Dendritic cell treated with granulocyte-macrophage colony-stimulating factor and Interleukin-4, amounts not matched to agents 40 ng/mL and 50 ng/mL, for 4 days (primary cell): ENCODE measurements at regions of chr6 and their contacts with region 1.

Region 1: DNA sequence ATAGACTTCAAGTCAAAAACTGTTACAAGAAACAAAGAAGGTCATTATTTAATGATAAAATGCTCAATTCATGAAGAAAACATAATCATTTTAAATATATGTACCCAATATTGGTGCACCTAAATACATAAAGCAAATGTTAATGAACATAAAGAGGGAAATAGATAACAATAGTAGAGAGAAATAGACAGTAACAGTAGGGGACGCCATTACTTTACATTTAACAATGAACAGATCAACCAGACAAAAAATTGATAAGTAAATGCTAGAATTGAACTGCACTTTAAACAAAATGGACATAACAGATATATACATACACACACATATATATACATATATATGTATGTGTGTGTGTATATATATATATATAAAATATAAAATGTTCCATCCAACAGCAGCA is 37.4 kb downstream of the IL22RA2 start:
- H3K4me3 Mint-ChIP-seq: no peak overlapping the region
- H3K27ac Mint-ChIP-seq: no peak overlapping the region
- H3K4me1 Mint-ChIP-seq: peaks cover 16% of the 10 kb centered on the region
- H3K27me3 Mint-ChIP-seq: peaks cover 7% of the 10 kb centered on the region

Region 2: GRCh38 chr6:137171824-137172705 is 36.0 kb after region 1 on chr6:
- intact Hi-C with region 1: no loop called
- H3K4me3 Mint-ChIP-seq: no peak overlapping the region
- H3K27ac Mint-ChIP-seq: peak overlapping the region; percentile 48
- H3K4me1 Mint-ChIP-seq: peaks cover 43% of the 10 kb centered on the region
- H3K27me3 Mint-ChIP-seq: no peaks in the 10 kb centered on the region

Region 3: DNA sequence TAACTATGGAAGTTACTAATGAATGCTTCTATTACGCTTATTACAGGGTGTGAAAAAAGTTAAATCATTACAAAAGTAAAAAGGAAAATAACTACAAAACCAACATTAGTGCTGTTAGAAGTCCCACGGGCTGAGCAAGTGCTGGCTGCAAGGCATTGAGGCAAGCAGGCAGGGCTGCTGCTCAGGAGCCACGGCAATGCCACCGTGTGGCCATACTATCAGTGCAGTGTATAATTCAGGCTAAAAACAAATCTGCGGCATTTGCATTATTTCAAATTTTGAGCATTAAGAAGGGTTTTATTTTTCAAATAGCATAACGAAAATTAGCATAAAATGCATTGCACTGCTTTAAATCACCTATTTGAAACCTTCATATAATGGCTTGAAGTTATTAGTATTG is 66.0 kb after region 1 on chr6:
- intact Hi-C with region 1: loop called (anchors 5 kb)
- H3K4me3 Mint-ChIP-seq: no peak overlapping the region
- H3K27ac Mint-ChIP-seq: no peak overlapping the region
- H3K4me1 Mint-ChIP-seq: peaks cover 16% of the 10 kb centered on the region
- H3K27me3 Mint-ChIP-seq: no peaks in the 10 kb centered on the region

Region 4: GRCh38 chr6:137218917-137219663 is 83.0 kb after region 1 on chr6 and contains the start of gene IFNGR1:
- intact Hi-C with region 1: loop called (anchors 5 kb)
- H3K4me3 Mint-ChIP-seq: peak within 1 kb of the TSS; percentile 93
- H3K27ac Mint-ChIP-seq: peak within 1 kb of the TSS; percentile 100
- H3K4me1 Mint-ChIP-seq: peaks cover 66% of the 10 kb centered on the region
- H3K27me3 Mint-ChIP-seq: no peaks in the 10 kb centered on the region

Region 5: GRCh38 chr6:137271245-137272183 is 135.4 kb after region 1 on chr6:
- intact Hi-C with region 1: loop called (anchors 5 kb)
- H3K4me3 Mint-ChIP-seq: no peak overlapping the region
- H3K27ac Mint-ChIP-seq: no peak overlapping the region
- H3K4me1 Mint-ChIP-seq: peaks cover 11% of the 10 kb centered on the region
- H3K27me3 Mint-ChIP-seq: no peaks in the 10 kb centered on the region

Region 6: DNA sequence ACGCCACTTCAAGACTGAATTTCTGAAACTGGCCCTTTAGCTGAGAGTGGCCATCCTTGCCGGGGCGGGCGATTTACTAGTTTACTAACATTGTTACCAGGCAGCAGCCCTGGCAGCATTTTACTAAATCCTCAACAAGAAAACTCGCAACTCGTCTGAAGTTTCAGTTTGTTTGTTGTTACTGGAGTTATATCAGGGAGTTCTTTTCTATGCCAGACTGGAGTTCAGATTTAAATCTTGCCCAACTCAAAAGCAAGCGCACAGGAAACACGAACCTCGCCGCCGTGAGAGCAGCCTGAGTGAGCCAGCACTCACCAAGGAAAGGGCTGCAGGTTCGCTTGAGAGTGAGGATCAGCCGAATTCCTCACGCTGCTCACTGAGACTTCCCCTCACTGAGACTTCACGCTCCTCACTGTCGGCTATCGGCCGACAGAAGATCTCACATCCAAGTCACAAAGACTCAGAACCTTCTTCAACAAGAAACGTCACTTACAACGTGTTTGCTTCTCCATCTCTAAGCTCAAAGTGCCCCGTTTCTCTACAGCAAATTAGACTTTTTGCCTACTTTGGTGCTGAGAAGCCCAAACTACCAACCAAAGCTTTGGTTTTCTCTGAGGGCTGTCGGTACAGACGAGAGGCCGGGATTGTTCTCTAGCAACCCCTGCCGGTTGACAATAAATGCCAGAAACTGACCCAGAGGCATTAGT is 279.2 kb after region 1 on chr6:
- intact Hi-C with region 1: loop called (anchors 5 kb)
- H3K4me3 Mint-ChIP-seq: peak overlapping the region; percentile 78
- H3K27ac Mint-ChIP-seq: peak overlapping the region; percentile 79
- H3K4me1 Mint-ChIP-seq: peaks cover 14% of the 10 kb centered on the region
- H3K27me3 Mint-ChIP-seq: peaks cover 19% of the 10 kb centered on the region